CD4-positive, alpha-beta T cell (primary cell): ENCODE measurements at regions of chr18 and their contacts with region 1.

Region 1: DNA sequence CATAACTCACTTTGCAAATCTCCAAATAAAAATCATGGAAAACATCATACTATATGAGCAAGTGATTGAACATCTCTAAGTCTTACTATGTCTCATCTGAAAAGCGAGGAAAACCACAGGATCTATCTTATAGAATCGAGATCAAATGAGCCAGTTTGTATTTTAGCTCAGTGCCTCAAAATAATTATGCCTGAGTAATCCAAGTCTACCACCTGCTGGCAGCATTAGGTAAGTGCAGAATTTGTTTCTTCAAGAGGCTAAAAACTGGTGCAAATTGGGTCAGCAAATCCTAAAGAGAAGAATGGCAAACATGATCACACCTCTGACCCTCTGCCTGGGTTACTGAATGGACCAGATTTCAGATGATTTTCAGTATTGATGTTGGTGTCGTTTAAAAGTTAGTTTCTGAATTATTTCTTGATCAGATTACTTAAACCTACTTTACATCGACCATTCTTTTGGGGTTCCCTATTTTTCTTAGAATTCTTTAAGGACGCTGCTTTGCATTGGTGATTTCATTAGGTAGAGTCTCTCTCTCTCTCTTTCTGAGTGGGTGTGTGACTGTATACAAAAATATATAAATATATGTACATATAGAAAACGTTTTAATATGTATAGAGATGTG is 12.7 kb upstream of the FHOD3 start:
- DNase-seq: peak in 10 of 14 experiments; percentile 12 to 79 (median 36)
- ATAC-seq: peak; percentile 59
- H3K4me3 ChIP-seq: no peak overlapping the region
- H3K4me3 Mint-ChIP-seq: no peak overlapping the region
- H3K27ac ChIP-seq: no peak overlapping the region
- H3K27ac Mint-ChIP-seq: no peak overlapping the region
- H3K4me1 ChIP-seq: no peaks in the 10 kb centered on the region
- H3K4me1 Mint-ChIP-seq: no peaks in the 10 kb centered on the region
- H3K27me3 ChIP-seq: peaks cover 7 to 20% of the 10 kb centered on the region in 2 experiments
- H3K27me3 Mint-ChIP-seq: peaks cover 25% of the 10 kb centered on the region
- CTCF ChIP-seq: peak; percentile 87

Region 2: DNA sequence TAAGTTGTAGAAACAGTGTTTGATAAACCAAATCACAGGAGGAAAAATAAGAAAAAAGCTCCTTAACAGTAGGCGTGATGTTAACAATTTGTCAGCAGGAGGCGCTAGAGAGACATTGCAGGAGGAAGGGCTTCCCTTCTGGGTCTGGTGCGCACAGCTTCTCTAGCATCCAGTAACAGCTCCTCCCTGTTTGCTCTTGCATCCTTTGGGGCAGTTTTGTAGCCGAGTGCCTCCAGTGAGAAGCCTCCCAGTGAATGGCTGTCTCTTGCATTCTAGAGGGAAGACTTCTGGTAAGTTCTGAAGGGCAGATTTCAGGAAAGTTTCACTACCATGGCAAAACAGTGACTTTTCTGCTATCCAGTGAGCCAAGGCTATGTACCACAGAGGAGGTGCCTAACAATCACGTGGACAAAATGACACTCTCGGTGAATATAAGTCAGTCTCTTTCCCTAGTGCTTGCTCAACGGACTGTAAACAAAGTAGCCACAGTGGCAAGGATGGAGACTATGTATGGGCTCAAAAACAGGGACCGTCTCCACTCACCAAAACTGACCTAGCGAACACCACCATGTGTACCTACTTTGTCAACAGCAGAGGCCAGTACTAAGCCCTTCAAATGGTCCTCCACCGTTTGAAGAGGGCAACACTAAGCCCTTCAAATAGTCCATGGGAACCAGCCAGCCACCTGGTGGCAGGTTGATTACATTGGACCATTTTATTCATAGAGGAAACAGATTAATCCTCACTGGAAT is 898.0 kb before region 1 on chr18:
- CTCF ChIA-PET with region 1: no interaction called
- POLR2A ChIA-PET with region 1: no interaction called
- intact Hi-C with region 1: loop called in 1 of 2 experiments (anchors 10 kb)
- DNase-seq: peak; percentile 29 to 89 (median 52)
- ATAC-seq: peak; percentile 99
- H3K4me3 ChIP-seq: no peak overlapping the region
- H3K4me3 Mint-ChIP-seq: no peak overlapping the region
- H3K27ac ChIP-seq: no peak overlapping the region
- H3K27ac Mint-ChIP-seq: no peak overlapping the region
- H3K4me1 ChIP-seq: peaks cover 5% of the 10 kb centered on the region
- H3K4me1 Mint-ChIP-seq: peaks cover 7% of the 10 kb centered on the region
- H3K27me3 ChIP-seq: peaks cover 0 to 4% of the 10 kb centered on the region in 2 experiments
- H3K27me3 Mint-ChIP-seq: peaks cover 23% of the 10 kb centered on the region
- CTCF ChIP-seq: peak; percentile 95

Region 3: GRCh38 chr18:35407871-35408481 is 876.8 kb before region 1 on chr18:
- CTCF ChIA-PET with region 1: no interaction called
- POLR2A ChIA-PET with region 1: no interaction called
- intact Hi-C with region 1: loop called in 1 of 2 experiments (anchors 5 kb)
- DNase-seq: peak in 8 of 14 experiments; percentile 5 to 78 (median 44)
- ATAC-seq: peak; percentile 75
- H3K4me3 ChIP-seq: no peak overlapping the region
- H3K4me3 Mint-ChIP-seq: no peak overlapping the region
- H3K27ac ChIP-seq: no peak overlapping the region
- H3K27ac Mint-ChIP-seq: no peak overlapping the region
- H3K4me1 ChIP-seq: peaks cover 6% of the 10 kb centered on the region
- H3K4me1 Mint-ChIP-seq: peaks cover 24% of the 10 kb centered on the region
- H3K27me3 ChIP-seq: no peaks in the 10 kb centered on the region
- H3K27me3 Mint-ChIP-seq: peaks cover 10% of the 10 kb centered on the region
- CTCF ChIP-seq: peak; percentile 94

Region 4: DNA sequence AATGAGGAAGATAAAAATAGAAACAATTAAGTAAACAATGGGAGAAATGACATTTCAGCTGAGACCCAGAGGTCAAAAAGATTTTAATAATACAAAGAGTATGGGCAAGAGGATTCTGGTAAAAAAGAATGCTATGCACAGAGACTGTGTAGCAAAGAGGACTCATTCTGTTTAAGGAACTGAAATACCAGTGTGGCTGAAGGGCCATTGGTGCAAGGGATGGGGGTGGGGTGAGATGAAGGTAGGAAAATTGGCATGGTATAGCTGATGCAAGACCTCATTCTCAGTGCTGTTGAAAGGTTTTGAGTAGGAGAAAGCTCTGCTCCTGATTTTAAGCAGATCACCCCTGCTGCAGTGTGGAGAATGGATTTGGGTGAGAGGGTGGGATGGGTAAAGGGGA is 692.5 kb before region 1 on chr18:
- CTCF ChIA-PET with region 1: no interaction called
- POLR2A ChIA-PET with region 1: no interaction called
- intact Hi-C with region 1: loop called in 1 of 2 experiments (anchors 10 kb)
- DNase-seq: no peak
- ATAC-seq: no peak
- H3K4me3 ChIP-seq: no peak overlapping the region
- H3K4me3 Mint-ChIP-seq: no peak overlapping the region
- H3K27ac ChIP-seq: no peak overlapping the region
- H3K27ac Mint-ChIP-seq: no peak overlapping the region
- H3K4me1 ChIP-seq: no peaks in the 10 kb centered on the region
- H3K4me1 Mint-ChIP-seq: peaks cover 32% of the 10 kb centered on the region
- H3K27me3 ChIP-seq: no peaks in the 10 kb centered on the region
- H3K27me3 Mint-ChIP-seq: no peaks in the 10 kb centered on the region
- CTCF ChIP-seq: no peak

Region 5: GRCh38 chr18:35756506-35757117 is 528.2 kb before region 1 on chr18:
- CTCF ChIA-PET with region 1: interaction called, 4 read pairs
- POLR2A ChIA-PET with region 1: no interaction called
- intact Hi-C with region 1: loop called (anchors 1 to 2 kb)
- DNase-seq: peak in 12 of 14 experiments; percentile 8 to 71 (median 36)
- ATAC-seq: peak; percentile 57
- H3K4me3 ChIP-seq: no peak overlapping the region
- H3K4me3 Mint-ChIP-seq: no peak overlapping the region
- H3K27ac ChIP-seq: no peak overlapping the region
- H3K27ac Mint-ChIP-seq: no peak overlapping the region
- H3K4me1 ChIP-seq: no peaks in the 10 kb centered on the region
- H3K4me1 Mint-ChIP-seq: no peaks in the 10 kb centered on the region
- H3K27me3 ChIP-seq: peaks cover 0 to 4% of the 10 kb centered on the region in 2 experiments
- H3K27me3 Mint-ChIP-seq: peaks cover 33% of the 10 kb centered on the region
- CTCF ChIP-seq: peak; percentile 96

Region 6: GRCh38 chr18:36015629-36016028 is 269.2 kb before region 1 on chr18:
- CTCF ChIA-PET with region 1: interaction called, 25 read pairs
- POLR2A ChIA-PET with region 1: interaction called, 4 read pairs
- intact Hi-C with region 1: loop called (anchors 1 kb)
- DNase-seq: no peak
- ATAC-seq: no peak
- H3K4me3 ChIP-seq: no peak overlapping the region
- H3K4me3 Mint-ChIP-seq: no peak overlapping the region
- H3K27ac ChIP-seq: no peak overlapping the region
- H3K27ac Mint-ChIP-seq: no peak overlapping the region
- H3K4me1 ChIP-seq: no peaks in the 10 kb centered on the region
- H3K4me1 Mint-ChIP-seq: peaks cover 7% of the 10 kb centered on the region
- H3K27me3 ChIP-seq: no peaks in the 10 kb centered on the region
- H3K27me3 Mint-ChIP-seq: no peaks in the 10 kb centered on the region
- CTCF ChIP-seq: no peak

Region 7: GRCh38 chr18:36095936-36096519 is 188.8 kb before region 1 on chr18:
- CTCF ChIA-PET with region 1: interaction called, 6 read pairs
- POLR2A ChIA-PET with region 1: no interaction called
- intact Hi-C with region 1: loop called (anchors 1 kb)
- DNase-seq: peak in 3 of 14 experiments; percentile 60 to 70 (median 68)
- ATAC-seq: no peak
- H3K4me3 ChIP-seq: no peak overlapping the region
- H3K4me3 Mint-ChIP-seq: no peak overlapping the region
- H3K27ac ChIP-seq: no peak overlapping the region
- H3K27ac Mint-ChIP-seq: no peak overlapping the region
- H3K4me1 ChIP-seq: no peaks in the 10 kb centered on the region
- H3K4me1 Mint-ChIP-seq: no peaks in the 10 kb centered on the region
- H3K27me3 ChIP-seq: no peaks in the 10 kb centered on the region
- H3K27me3 Mint-ChIP-seq: no peaks in the 10 kb centered on the region
- CTCF ChIP-seq: peak; percentile 84

Region 8: DNA sequence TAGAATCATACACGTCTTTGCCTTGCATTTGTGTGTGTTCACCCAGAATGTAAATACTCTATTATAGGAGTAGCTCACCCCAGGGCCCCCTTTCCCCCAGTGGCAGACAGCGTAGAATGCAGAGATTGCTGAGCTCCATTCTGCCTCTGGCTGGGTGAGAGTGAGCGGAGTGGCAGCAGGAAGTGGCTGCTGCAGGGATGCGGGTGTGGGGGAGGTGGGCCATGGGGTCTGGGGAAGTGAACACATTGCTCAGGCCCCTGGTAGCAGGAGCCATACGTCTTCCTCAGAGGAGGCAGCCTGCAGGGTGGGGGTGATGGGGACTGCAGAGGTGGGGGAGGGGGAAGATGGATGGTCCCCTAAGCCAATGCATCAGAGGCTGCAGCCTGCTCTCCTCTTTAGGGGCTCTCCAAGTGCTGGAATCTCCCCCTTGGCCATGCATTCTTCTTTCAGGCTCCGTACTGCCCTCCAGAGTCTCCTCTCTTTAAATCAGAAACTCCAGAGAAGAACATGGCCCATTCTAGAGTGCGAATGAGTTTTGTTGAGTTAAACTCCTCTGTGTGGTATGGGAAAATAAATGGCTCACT is 1208.7 kb after region 1 on chr18:
- CTCF ChIA-PET with region 1: no interaction called
- POLR2A ChIA-PET with region 1: no interaction called
- intact Hi-C with region 1: no loop called
- DNase-seq: no peak
- ATAC-seq: no peak
- H3K4me3 ChIP-seq: no peak overlapping the region
- H3K4me3 Mint-ChIP-seq: no peak overlapping the region
- H3K27ac ChIP-seq: no peak overlapping the region
- H3K27ac Mint-ChIP-seq: no peak overlapping the region
- H3K4me1 ChIP-seq: no peaks in the 10 kb centered on the region
- H3K4me1 Mint-ChIP-seq: no peaks in the 10 kb centered on the region
- H3K27me3 ChIP-seq: peaks cover 6 to 8% of the 10 kb centered on the region in 2 experiments
- H3K27me3 Mint-ChIP-seq: peaks cover 37% of the 10 kb centered on the region
- CTCF ChIP-seq: no peak